ENCODE measurements at regions of chr6 and their contacts with region 1.

Region 1: DNA sequence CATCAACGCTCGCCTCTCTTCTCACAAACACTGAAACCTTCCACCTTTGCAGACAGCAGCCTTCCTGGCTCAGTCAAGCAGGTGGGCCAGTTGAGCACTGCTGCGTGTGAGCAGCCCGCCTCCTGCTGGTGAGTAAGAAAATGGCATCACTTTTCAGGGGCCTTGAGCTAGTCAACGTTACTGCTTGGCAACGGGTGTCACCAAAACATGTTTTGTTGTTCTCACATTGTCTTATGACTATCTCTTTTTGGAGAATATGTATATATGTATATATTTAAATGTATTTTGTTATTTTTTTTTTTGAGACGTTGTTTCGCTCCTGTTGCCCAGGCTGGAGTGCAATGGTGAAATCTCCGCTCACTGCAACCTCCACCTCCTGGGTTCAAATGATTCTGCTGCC is 97.0 kb upstream of the AGPAT4 start:
- DNase-seq: peak in 9 of 10 donors; percentile 53 to 82 (median 73)
- H3K4me3 ChIP-seq: no peak overlapping the region
- H3K27ac ChIP-seq: peak overlapping the region in 13 of 59 donors; percentile 4 to 65 (median 43)
- H3K27me3 ChIP-seq: no peaks in the 10 kb centered on the region
- CTCF ChIP-seq: peak; percentile 86 to 99 (median 95)

Region 2: GRCh38 chr6:160733050-160733646 is 637.7 kb before region 1 on chr6:
- intact Hi-C with region 1: loop called (anchors 5 kb)
- DNase-seq: peak in 7 of 10 donors; percentile 11 to 58 (median 44)
- H3K4me3 ChIP-seq: no peak overlapping the region
- H3K27ac ChIP-seq: no peak overlapping the region
- H3K27me3 ChIP-seq: peaks cover 0 to 18% (median 0%) of the 10 kb centered on the region in 45 donors
- CTCF ChIP-seq: peak; percentile 40 to 80 (median 69)

Region 3: DNA sequence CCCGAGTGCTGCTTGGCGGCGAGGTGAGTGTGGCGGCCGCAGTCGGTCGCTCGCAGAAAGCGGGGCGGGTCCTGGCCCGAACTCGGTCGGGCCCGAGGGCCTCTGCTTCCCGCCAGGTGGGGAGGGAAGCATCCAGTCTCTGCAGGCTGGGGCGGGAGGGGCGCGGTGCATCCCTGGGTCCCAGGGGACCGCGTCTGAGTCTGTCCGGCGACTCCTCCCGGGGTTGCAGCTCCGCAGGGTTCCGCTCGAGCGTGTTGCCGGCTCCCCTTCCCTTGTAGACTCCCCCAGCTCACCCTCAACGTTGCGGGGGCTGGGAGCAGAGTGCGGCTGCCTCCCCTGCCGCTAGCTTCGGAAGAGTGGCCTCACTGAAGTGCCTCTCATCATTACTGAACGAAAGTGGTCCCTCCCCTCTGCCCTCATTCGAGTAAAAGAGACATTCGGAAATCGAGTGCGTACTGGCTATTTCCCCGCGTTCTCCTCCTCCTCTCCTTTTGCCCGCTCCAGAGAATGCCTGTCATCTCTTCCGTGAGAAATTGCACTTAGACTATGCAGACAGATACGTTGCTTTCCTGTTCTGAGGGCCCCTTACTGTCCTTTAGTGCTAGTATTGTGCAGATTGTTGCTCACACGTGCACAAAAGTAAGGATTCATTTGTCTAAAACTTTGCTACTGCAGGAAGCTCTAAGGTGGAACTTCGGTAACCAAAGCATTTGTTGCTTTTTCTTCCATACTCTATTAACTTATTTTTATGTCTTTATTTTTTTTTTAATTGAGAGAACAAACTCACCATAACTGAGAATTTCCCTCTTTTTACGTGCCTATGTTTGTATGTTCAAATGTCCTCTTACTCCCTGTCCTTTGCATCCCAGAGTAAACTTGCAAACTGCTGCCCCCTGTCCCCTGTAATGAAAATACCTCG is 378.6 kb before region 1 on chr6:
- intact Hi-C with region 1: loop called (anchors 5 kb)
- DNase-seq: peak in 9 of 10 donors; percentile 29 to 61 (median 46)
- H3K4me3 ChIP-seq: peak overlapping the region; percentile 57 to 98 (median 92)
- H3K27ac ChIP-seq: peak overlapping the region; percentile 73 to 98 (median 93)
- H3K27me3 ChIP-seq: no peaks in the 10 kb centered on the region
- CTCF ChIP-seq: peak in 54 of 56 donors; percentile 26 to 72 (median 56)

Region 4: GRCh38 chr6:161152907-161153662 is 217.8 kb before region 1 on chr6:
- intact Hi-C with region 1: loop called (anchors 5 to 10 kb)
- DNase-seq: no peak
- H3K4me3 ChIP-seq: no peak overlapping the region
- H3K27ac ChIP-seq: peak overlapping the region in 17 of 59 donors; percentile 4 to 70 (median 46)
- H3K27me3 ChIP-seq: no peaks in the 10 kb centered on the region
- CTCF ChIP-seq: peak in 47 of 56 donors; percentile 18 to 65 (median 46)

Region 5: DNA sequence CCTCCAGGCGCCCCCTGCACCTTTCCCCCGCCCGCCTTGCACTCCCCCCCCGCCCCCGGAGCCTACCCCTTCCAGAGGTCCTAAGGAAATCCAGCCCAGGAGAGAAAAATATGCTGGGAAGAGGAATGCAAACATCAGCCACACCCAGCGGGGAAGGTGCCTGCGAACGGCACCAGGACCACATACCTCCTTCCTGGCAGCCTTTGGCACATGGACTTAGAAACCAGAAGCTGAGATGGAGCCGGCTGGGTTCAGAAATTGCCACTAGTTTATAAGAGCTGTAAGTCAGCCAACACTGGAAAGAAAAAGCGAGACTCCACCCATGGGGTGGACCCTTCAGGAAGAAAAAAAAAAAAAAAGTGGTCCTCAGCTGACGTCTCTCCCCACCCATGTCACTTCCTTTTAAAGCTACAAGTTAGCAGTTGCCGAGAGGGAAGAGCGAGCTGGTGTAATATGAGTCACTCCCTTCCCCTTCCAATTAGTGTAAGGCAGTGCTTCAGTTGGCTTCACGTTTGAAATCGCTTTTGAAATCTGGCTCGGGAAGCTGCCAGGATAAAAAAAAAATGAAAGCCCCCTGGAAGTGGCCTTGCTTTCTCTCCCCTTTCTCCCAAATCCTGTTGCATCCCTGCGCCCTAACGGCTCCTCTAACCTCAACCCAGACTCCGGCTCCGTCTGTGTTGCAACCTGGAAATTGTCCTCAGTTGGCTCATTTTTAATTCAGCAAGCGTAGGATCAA is 97.0 kb before region 1 on chr6 and contains the start of gene AGPAT4:
- intact Hi-C with region 1: loop called (anchors 2 to 5 kb)
- DNase-seq: peak in 8 of 10 donors; percentile 45 to 79 (median 54)
- H3K4me3 ChIP-seq: peak within 1 kb of the TSS; percentile 60 to 90 (median 75)
- H3K27ac ChIP-seq: peak within 1 kb of the TSS; percentile 39 to 93 (median 87)
- H3K27me3 ChIP-seq: no peaks in the 10 kb centered on the region
- CTCF ChIP-seq: peak in 5 of 56 donors; percentile 4 to 22 (median 7)
- total RNA-seq, gene AGPAT4: 34.6 to 138 (median 62.5) TPM